CD4-positive, alpha-beta memory T cell (primary cell): ENCODE measurements at regions of chr1 and their contacts with region 1.

Region 1: GRCh38 chr1:226708342-226708780 is 30.7 kb downstream of the ITPKB start:
- DNase-seq: peak in 1 of 5 donors; percentile 69
- H3K4me3 ChIP-seq: no peak overlapping the region
- H3K4me3 Mint-ChIP-seq: peak overlapping the region in 7 of 8 donors; percentile 39 to 90 (median 71)
- H3K27ac ChIP-seq: peak overlapping the region; percentile 60
- H3K27ac Mint-ChIP-seq: peak overlapping the region; percentile 70 to 100 (median 92)
- H3K4me1 ChIP-seq: peaks cover 92% of the 10 kb centered on the region
- H3K4me1 Mint-ChIP-seq: peaks cover 70 to 97% (median 87%) of the 10 kb centered on the region in 4 donors
- H3K27me3 ChIP-seq: no peaks in the 10 kb centered on the region
- H3K27me3 Mint-ChIP-seq: peaks cover 2 to 3% of the 10 kb centered on the region in 2 donors

Region 2: GRCh38 chr1:226510453-226510852 is 197.9 kb before region 1 on chr1:
- CTCF ChIA-PET with region 1: no interaction called
- POLR2A ChIA-PET with region 1: no interaction called
- intact Hi-C with region 1: no loop called
- DNase-seq: no peak
- H3K4me3 ChIP-seq: no peak overlapping the region
- H3K4me3 Mint-ChIP-seq: no peak overlapping the region
- H3K27ac ChIP-seq: no peak overlapping the region
- H3K27ac Mint-ChIP-seq: no peak overlapping the region
- H3K4me1 ChIP-seq: no peaks in the 10 kb centered on the region
- H3K4me1 Mint-ChIP-seq: no peaks in the 10 kb centered on the region
- H3K27me3 ChIP-seq: peaks cover 5% of the 10 kb centered on the region
- H3K27me3 Mint-ChIP-seq: peaks cover 15 to 30% of the 10 kb centered on the region in 2 donors

Region 3: GRCh38 chr1:226634166-226634588 is 74.2 kb before region 1 on chr1:
- CTCF ChIA-PET with region 1: interaction called, 7 read pairs
- POLR2A ChIA-PET with region 1: interaction called, 18 read pairs
- intact Hi-C with region 1: no loop called
- DNase-seq: peak; percentile 74 to 81 (median 78)
- H3K4me3 ChIP-seq: no peak overlapping the region
- H3K4me3 Mint-ChIP-seq: peak overlapping the region in 7 of 8 donors; percentile 1 to 82 (median 53)
- H3K27ac ChIP-seq: peak overlapping the region; percentile 56
- H3K27ac Mint-ChIP-seq: peak overlapping the region; percentile 72 to 94 (median 88)
- H3K4me1 ChIP-seq: peaks cover 53% of the 10 kb centered on the region
- H3K4me1 Mint-ChIP-seq: peaks cover 28 to 70% (median 53%) of the 10 kb centered on the region in 4 donors
- H3K27me3 ChIP-seq: no peaks in the 10 kb centered on the region
- H3K27me3 Mint-ChIP-seq: no peaks in the 10 kb centered on the region

Region 4: GRCh38 chr1:226662642-226663326 is 45.6 kb before region 1 on chr1:
- CTCF ChIA-PET with region 1: interaction called, 4 read pairs
- POLR2A ChIA-PET with region 1: interaction called, 8 read pairs
- intact Hi-C with region 1: loop called (anchors 1 kb)
- DNase-seq: peak; percentile 84 to 99 (median 86)
- H3K4me3 ChIP-seq: no peak overlapping the region
- H3K4me3 Mint-ChIP-seq: peak overlapping the region; percentile 57 to 88 (median 76)
- H3K27ac ChIP-seq: peak overlapping the region; percentile 74
- H3K27ac Mint-ChIP-seq: peak overlapping the region in 6 of 7 donors; percentile 96 to 99 (median 97)
- H3K4me1 ChIP-seq: no peaks in the 10 kb centered on the region
- H3K4me1 Mint-ChIP-seq: peaks cover 0 to 90% (median 38%) of the 10 kb centered on the region in 4 donors
- H3K27me3 ChIP-seq: no peaks in the 10 kb centered on the region
- H3K27me3 Mint-ChIP-seq: no peaks in the 10 kb centered on the region

Region 5: DNA sequence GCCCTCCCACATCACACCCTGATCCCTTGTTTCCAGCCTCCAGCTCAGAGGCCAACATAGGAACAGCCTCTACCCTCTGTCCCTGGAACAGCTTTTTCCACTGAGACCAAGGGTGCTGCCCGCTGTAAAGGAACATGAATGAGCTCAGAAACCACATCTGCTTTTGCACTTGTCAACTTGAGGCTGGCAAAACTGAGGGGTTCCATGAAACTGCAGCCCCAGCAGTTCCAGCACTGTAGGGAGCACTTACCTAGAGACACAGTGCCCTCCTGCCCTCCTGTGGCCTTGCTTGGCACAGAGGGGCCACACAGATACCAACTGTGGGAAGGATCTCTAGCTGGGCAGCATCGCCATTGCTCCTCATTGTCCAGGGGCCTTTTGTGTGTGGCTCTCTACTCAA is 20.9 kb before region 1 on chr1:
- CTCF ChIA-PET with region 1: interaction called, 7 read pairs
- POLR2A ChIA-PET with region 1: interaction called, 19 read pairs
- intact Hi-C with region 1: loop called (anchors 1 kb)
- DNase-seq: peak; percentile 43 to 71 (median 52)
- H3K4me3 ChIP-seq: no peak overlapping the region
- H3K4me3 Mint-ChIP-seq: peak overlapping the region in 7 of 8 donors; percentile 21 to 70 (median 37)
- H3K27ac ChIP-seq: peak overlapping the region; percentile 89
- H3K27ac Mint-ChIP-seq: peak overlapping the region; percentile 94 to 99 (median 99)
- H3K4me1 ChIP-seq: peaks cover 100% of the 10 kb centered on the region
- H3K4me1 Mint-ChIP-seq: peaks cover 92 to 100% (median 97%) of the 10 kb centered on the region in 4 donors
- H3K27me3 ChIP-seq: no peaks in the 10 kb centered on the region
- H3K27me3 Mint-ChIP-seq: no peaks in the 10 kb centered on the region

Region 6: DNA sequence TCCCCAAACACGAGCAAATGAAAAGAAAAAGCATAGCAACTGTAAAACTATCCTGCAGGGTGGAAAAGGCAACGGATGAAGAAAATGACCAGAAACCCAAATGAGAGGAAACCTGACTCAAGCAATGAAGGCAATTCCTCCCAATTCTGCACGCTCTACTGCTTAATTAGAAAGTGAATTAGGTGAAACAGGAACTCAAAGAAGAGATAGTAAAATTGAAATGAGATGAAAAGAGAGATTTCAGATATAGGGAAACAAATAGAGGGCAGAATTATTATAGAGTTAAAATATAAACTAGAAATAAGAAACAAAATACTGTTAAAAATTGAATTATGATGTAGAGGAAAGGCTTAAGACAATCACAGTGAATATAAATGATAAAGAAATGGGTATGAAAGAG is 58.2 kb after region 1 on chr1:
- CTCF ChIA-PET with region 1: no interaction called
- POLR2A ChIA-PET with region 1: no interaction called
- intact Hi-C with region 1: loop called (anchors 2 kb)
- DNase-seq: no peak
- H3K4me3 ChIP-seq: no peak overlapping the region
- H3K4me3 Mint-ChIP-seq: no peak overlapping the region
- H3K27ac ChIP-seq: no peak overlapping the region
- H3K27ac Mint-ChIP-seq: no peak overlapping the region
- H3K4me1 ChIP-seq: peaks cover 13% of the 10 kb centered on the region
- H3K4me1 Mint-ChIP-seq: peaks cover 16 to 21% (median 19%) of the 10 kb centered on the region in 4 donors
- H3K27me3 ChIP-seq: no peaks in the 10 kb centered on the region
- H3K27me3 Mint-ChIP-seq: peaks cover 2 to 5% of the 10 kb centered on the region in 2 donors

Region 7: GRCh38 chr1:226786550-226786949 is 78.2 kb after region 1 on chr1:
- CTCF ChIA-PET with region 1: no interaction called
- POLR2A ChIA-PET with region 1: no interaction called
- intact Hi-C with region 1: no loop called
- DNase-seq: no peak
- H3K4me3 ChIP-seq: no peak overlapping the region
- H3K4me3 Mint-ChIP-seq: no peak overlapping the region
- H3K27ac ChIP-seq: no peak overlapping the region
- H3K27ac Mint-ChIP-seq: no peak overlapping the region
- H3K4me1 ChIP-seq: no peaks in the 10 kb centered on the region
- H3K4me1 Mint-ChIP-seq: peaks cover 0 to 5% (median 1%) of the 10 kb centered on the region in 4 donors
- H3K27me3 ChIP-seq: no peaks in the 10 kb centered on the region
- H3K27me3 Mint-ChIP-seq: peaks cover 0 to 3% of the 10 kb centered on the region in 2 donors

Region 8: DNA sequence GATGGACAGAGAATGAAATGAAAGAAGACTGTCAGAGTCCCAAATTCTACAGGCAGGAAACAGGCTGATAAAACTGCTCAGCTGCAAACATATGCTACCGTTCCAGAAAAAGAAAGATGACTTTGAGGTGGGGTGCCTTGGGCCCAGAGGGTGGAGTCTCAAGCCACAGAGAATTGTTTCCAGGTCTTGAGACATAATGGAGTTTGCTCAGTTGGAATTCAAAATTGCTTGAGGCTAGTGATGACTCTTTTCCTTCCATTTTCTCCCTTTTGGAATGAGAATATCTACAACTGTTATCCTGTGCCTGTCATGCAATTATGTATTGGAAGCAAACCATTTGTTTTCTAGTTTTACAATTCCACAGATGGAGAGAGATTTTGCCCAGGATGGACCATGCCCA is 138.4 kb after region 1 on chr1:
- CTCF ChIA-PET with region 1: no interaction called
- POLR2A ChIA-PET with region 1: no interaction called
- intact Hi-C with region 1: no loop called
- DNase-seq: no peak
- H3K4me3 ChIP-seq: no peak overlapping the region
- H3K4me3 Mint-ChIP-seq: no peak overlapping the region
- H3K27ac ChIP-seq: no peak overlapping the region
- H3K27ac Mint-ChIP-seq: no peak overlapping the region
- H3K4me1 ChIP-seq: no peaks in the 10 kb centered on the region
- H3K4me1 Mint-ChIP-seq: peaks cover 0 to 7% (median 1%) of the 10 kb centered on the region in 4 donors
- H3K27me3 ChIP-seq: no peaks in the 10 kb centered on the region
- H3K27me3 Mint-ChIP-seq: no peaks in the 10 kb centered on the region